BJ (cell line): ENCODE measurements at regions of chr9 and their contacts with region 1.

Region 1: DNA sequence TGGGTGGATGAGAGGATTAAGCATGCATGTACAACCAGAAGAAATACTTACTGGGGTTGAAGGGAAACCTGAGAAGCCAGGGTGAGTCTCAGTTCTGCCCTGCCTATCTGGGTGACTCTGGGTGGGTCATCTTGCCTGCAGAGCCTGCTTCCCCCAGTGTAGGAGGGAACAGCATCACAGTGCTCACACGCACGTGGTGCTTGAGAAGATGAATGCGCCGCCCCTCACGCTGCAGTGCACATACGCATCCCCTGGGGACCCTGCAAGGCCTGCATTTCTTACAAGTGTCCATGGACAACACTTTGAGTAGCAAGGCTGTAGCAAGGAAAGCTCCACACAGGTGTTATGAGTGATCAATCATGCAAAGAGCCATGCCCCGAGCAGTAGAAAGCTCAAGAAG is 18.7 kb upstream of the GABBR2 start:
- DNase-seq: no peak
- H3K4me3 ChIP-seq: no peak overlapping the region
- H3K27me3 ChIP-seq: peaks cover 12% of the 10 kb centered on the region
- CTCF ChIP-seq: no peak

Region 2: DNA sequence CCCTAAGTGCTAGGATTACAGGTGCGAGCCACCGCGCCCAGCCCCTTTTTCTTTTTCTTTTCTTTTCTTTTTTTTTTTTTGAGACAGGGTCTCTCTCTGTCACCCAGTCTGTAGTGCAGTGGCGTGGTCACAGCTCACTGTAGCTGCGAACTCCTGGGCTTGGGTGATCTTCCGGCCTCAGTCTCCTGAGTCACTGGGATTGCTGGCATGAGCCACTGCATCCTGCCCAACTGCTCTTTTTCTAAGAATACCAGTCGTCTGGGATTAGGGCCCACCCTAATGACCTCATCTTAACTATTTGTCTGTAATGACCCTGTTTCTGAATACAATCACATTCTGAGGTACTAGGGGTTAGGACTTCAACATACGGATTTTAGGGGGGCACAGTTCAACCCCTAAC is 705.0 kb before region 1 on chr9:
- CTCF ChIA-PET with region 1: no interaction called
- POLR2A ChIA-PET with region 1: interaction called, 21 read pairs
- DNase-seq: no peak
- H3K4me3 ChIP-seq: no peak overlapping the region
- H3K27me3 ChIP-seq: no peaks in the 10 kb centered on the region
- CTCF ChIP-seq: no peak

Region 3: DNA sequence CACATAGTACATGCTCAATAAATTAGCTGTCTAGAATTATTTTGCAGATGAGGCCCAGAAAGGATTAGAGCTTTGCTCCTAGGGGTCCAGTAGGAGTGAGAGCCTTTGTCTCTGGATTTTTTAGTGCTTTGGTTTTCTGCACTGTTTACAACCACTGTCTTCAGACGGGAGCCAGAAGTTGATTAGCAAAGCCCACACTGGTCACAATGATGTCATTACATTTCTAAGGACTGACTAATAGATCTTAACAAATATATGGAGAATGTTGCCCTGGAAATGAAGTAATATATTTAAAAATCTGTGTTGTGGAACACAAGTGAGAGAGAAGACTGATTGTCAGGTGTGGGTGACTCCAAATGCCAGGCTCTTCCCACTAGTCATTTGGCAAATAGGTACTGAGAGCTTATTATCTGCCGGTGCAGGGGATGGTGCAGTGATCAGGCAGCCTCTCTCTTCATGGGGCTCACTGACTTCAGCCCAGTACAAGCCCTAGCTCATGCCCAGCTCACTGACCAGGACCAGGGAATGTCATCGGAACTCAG is 292.4 kb after region 1 on chr9:
- CTCF ChIA-PET with region 1: no interaction called
- POLR2A ChIA-PET with region 1: no interaction called
- DNase-seq: peak; percentile 98
- H3K4me3 ChIP-seq: no peak overlapping the region
- H3K27me3 ChIP-seq: no peaks in the 10 kb centered on the region
- CTCF ChIP-seq: no peak